Endothelial cell of umbilical vein (primary cell): ENCODE measurements at regions of chr5 and their contacts with region 1.

Region 1: DNA sequence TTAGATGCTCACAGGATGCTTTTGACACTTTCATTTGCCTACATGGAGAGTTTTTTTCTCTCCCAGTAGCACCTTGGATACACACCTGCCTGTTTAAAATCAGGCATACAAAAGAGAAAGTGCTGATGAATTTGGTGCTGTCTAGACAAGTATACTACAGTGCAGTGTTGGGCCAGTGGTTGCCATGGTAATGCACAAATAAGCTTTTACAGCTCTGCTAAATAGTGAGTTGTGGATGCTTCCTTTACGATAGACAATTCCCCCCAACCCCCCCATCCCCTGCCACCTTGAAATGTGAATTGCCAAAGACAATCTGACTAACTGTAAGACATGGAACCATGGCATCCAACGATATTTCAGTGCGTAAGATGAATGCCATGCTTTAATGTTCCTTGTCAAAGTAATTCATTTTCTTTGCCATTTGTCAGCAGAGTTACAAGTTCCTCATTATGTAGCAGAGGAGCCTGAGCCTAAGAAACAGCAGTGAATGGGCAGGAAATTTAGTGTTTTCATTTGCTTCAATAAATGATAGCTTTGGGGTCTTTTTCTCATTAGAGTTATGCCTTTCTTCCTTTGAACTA is 91.5 kb upstream of the NREP start:
- DNase-seq: no peak
- H3K4me3 ChIP-seq: no peak overlapping the region
- H3K27ac ChIP-seq: no peak overlapping the region
- H3K4me1 ChIP-seq: no peaks in the 10 kb centered on the region
- H3K27me3 ChIP-seq: no peaks in the 10 kb centered on the region
- CTCF ChIP-seq: no peak
- POLR2A ChIP-seq: no peak

Region 2: DNA sequence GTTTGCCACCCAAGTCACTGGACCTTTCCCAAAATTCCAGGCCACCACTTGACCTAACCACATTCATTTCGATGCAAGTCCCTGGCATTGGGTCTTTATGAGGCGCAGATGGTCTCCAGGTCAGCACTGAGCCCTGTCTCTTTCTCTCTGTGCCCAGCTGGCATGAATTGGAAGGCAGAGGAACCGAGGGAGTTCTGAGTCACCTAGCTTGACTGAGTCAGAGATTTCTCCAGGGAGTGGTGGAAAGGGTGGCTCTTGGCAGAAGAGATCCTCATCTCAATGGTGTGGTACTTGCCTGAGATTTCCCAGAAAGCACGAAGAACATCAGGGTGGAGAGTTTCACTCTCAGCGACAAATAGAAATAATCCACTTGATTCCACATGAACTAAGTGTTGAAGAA is 712.5 kb before region 1 on chr5:
- CTCF ChIA-PET with region 1: no interaction called
- POLR2A ChIA-PET with region 1: no interaction called
- dilution Hi-C with region 1: no loop called
- intact Hi-C with region 1: loop called (anchors 10 kb)
- DNase-seq: no peak
- H3K4me3 ChIP-seq: no peak overlapping the region
- H3K27ac ChIP-seq: no peak overlapping the region
- H3K4me1 ChIP-seq: peaks cover 16% of the 10 kb centered on the region
- H3K27me3 ChIP-seq: no peaks in the 10 kb centered on the region
- CTCF ChIP-seq: no peak
- POLR2A ChIP-seq: no peak